CD4-positive, alpha-beta T cell (primary cell): ENCODE measurements at regions of chr13 and their contacts with region 1.

Region 1: GRCh38 chr13:24727731-24728601 is 36.0 kb upstream of the RNF17 start:
- DNase-seq: peak; percentile 51 to 91 (median 63)
- ATAC-seq: peak; percentile 99
- H3K4me3 ChIP-seq: no peak overlapping the region
- H3K4me3 Mint-ChIP-seq: no peak overlapping the region
- H3K27ac ChIP-seq: no peak overlapping the region
- H3K27ac Mint-ChIP-seq: no peak overlapping the region
- H3K4me1 ChIP-seq: peaks cover 3% of the 10 kb centered on the region
- H3K4me1 Mint-ChIP-seq: no peaks in the 10 kb centered on the region
- H3K27me3 ChIP-seq: no peaks in the 10 kb centered on the region
- H3K27me3 Mint-ChIP-seq: peaks cover 3% of the 10 kb centered on the region
- CTCF ChIP-seq: peak; percentile 89

Region 2: GRCh38 chr13:24574847-24575246 is 153.1 kb before region 1 on chr13:
- CTCF ChIA-PET with region 1: no interaction called
- POLR2A ChIA-PET with region 1: no interaction called
- intact Hi-C with region 1: loop called (anchors 2 kb)
- DNase-seq: no peak
- ATAC-seq: no peak
- H3K4me3 ChIP-seq: no peak overlapping the region
- H3K4me3 Mint-ChIP-seq: no peak overlapping the region
- H3K27ac ChIP-seq: no peak overlapping the region
- H3K27ac Mint-ChIP-seq: no peak overlapping the region
- H3K4me1 ChIP-seq: no peaks in the 10 kb centered on the region
- H3K4me1 Mint-ChIP-seq: no peaks in the 10 kb centered on the region
- H3K27me3 ChIP-seq: no peaks in the 10 kb centered on the region
- H3K27me3 Mint-ChIP-seq: peaks cover 14% of the 10 kb centered on the region
- CTCF ChIP-seq: no peak

Region 3: DNA sequence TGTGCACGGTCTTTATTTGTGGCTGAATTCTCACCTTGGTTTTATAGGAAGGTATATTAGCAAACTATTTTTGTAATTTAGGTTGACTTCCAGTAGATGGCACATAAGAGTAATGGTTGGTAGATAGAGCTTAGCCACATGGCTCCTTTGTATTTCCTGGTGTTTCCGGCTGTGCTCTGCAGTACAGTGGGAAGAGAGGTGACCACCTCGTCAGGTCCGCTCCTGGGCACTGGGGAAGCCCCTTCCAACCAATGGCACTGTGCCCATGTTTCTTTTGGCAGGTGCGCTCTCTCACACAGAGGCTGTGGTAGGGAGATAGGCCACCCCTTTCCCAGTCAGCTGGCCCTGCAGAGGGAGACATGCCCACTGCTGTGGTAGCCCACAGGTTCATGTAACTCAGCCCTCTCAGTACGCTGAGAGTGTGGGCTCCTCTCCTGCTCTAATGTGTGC is 122.0 kb before region 1 on chr13:
- CTCF ChIA-PET with region 1: interaction called, 6 read pairs
- POLR2A ChIA-PET with region 1: no interaction called
- intact Hi-C with region 1: loop called (anchors 1 kb)
- DNase-seq: peak in 1 of 14 experiments; percentile 53
- ATAC-seq: peak; percentile 91
- H3K4me3 ChIP-seq: no peak overlapping the region
- H3K4me3 Mint-ChIP-seq: no peak overlapping the region
- H3K27ac ChIP-seq: no peak overlapping the region
- H3K27ac Mint-ChIP-seq: no peak overlapping the region
- H3K4me1 ChIP-seq: peaks cover 5% of the 10 kb centered on the region
- H3K4me1 Mint-ChIP-seq: peaks cover 7% of the 10 kb centered on the region
- H3K27me3 ChIP-seq: no peaks in the 10 kb centered on the region
- H3K27me3 Mint-ChIP-seq: no peaks in the 10 kb centered on the region
- CTCF ChIP-seq: peak; percentile 49

Region 4: DNA sequence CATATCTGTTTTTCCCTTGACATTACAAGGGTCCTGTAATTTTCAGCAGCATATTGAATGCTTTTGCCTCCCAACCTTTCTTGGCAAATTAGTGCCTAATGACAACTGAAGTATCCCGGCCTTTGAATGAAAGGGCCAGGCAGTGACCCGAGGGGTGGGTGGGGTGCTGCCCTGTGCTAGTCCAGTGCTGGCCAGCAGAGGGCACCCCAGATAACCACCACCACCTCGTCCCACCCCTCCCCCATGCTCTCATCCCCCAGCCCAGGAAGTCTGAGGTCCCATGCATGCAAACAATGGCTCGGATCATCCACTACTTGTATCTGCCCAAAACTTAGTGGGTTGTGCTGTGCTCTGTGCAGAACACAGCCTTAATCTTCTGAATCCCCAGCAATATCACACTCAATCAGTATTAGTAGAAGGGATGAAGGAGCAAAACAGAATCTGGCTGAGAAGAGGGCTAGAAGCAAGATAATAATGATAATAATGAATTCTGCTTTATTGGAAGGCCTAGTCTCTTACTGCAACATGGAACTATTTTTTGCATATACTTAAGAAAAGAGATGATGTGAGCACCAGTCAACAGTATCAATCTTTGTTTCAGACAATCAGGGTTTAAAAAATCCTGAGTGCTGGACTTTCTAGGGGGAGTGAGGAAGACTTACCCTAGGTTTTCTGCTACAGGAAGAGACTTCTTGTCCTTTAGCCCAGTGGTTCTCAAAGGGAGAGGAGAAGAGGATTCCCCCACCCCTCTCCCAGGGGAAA is 43.9 kb before region 1 on chr13:
- CTCF ChIA-PET with region 1: interaction called, 4 read pairs
- POLR2A ChIA-PET with region 1: no interaction called
- intact Hi-C with region 1: loop called (anchors 2 kb)
- DNase-seq: peak; percentile 29 to 82 (median 56)
- ATAC-seq: peak; percentile 79
- H3K4me3 ChIP-seq: no peak overlapping the region
- H3K4me3 Mint-ChIP-seq: peak overlapping the region; percentile 17
- H3K27ac ChIP-seq: no peak overlapping the region
- H3K27ac Mint-ChIP-seq: peak overlapping the region; percentile 2
- H3K4me1 ChIP-seq: peaks cover 35% of the 10 kb centered on the region
- H3K4me1 Mint-ChIP-seq: peaks cover 30% of the 10 kb centered on the region
- H3K27me3 ChIP-seq: peaks cover 13 to 22% of the 10 kb centered on the region in 2 experiments
- H3K27me3 Mint-ChIP-seq: peaks cover 19% of the 10 kb centered on the region
- CTCF ChIP-seq: peak; percentile 89

Region 5: GRCh38 chr13:24693862-24694471 is 34.0 kb before region 1 on chr13:
- CTCF ChIA-PET with region 1: interaction called, 10 read pairs
- POLR2A ChIA-PET with region 1: no interaction called
- intact Hi-C with region 1: no loop called
- DNase-seq: peak in 5 of 14 experiments; percentile 17 to 77 (median 53)
- ATAC-seq: peak; percentile 60
- H3K4me3 ChIP-seq: no peak overlapping the region
- H3K4me3 Mint-ChIP-seq: no peak overlapping the region
- H3K27ac ChIP-seq: no peak overlapping the region
- H3K27ac Mint-ChIP-seq: no peak overlapping the region
- H3K4me1 ChIP-seq: peaks cover 6% of the 10 kb centered on the region
- H3K4me1 Mint-ChIP-seq: peaks cover 5% of the 10 kb centered on the region
- H3K27me3 ChIP-seq: peaks cover 6 to 29% of the 10 kb centered on the region in 2 experiments
- H3K27me3 Mint-ChIP-seq: peaks cover 36% of the 10 kb centered on the region
- CTCF ChIP-seq: peak; percentile 67

Region 6: GRCh38 chr13:24709186-24709913 is 18.6 kb before region 1 on chr13:
- CTCF ChIA-PET with region 1: interaction called, 7 read pairs
- POLR2A ChIA-PET with region 1: no interaction called
- intact Hi-C with region 1: loop called in 1 of 2 experiments (anchors 1 kb)
- DNase-seq: peak; percentile 23 to 85 (median 50)
- ATAC-seq: peak; percentile 96
- H3K4me3 ChIP-seq: peak overlapping the region; percentile 27
- H3K4me3 Mint-ChIP-seq: peak overlapping the region; percentile 22
- H3K27ac ChIP-seq: no peak overlapping the region
- H3K27ac Mint-ChIP-seq: peak overlapping the region; percentile 77
- H3K4me1 ChIP-seq: peaks cover 17% of the 10 kb centered on the region
- H3K4me1 Mint-ChIP-seq: peaks cover 14% of the 10 kb centered on the region
- H3K27me3 ChIP-seq: no peaks in the 10 kb centered on the region
- H3K27me3 Mint-ChIP-seq: no peaks in the 10 kb centered on the region
- CTCF ChIP-seq: peak; percentile 3

Region 7: DNA sequence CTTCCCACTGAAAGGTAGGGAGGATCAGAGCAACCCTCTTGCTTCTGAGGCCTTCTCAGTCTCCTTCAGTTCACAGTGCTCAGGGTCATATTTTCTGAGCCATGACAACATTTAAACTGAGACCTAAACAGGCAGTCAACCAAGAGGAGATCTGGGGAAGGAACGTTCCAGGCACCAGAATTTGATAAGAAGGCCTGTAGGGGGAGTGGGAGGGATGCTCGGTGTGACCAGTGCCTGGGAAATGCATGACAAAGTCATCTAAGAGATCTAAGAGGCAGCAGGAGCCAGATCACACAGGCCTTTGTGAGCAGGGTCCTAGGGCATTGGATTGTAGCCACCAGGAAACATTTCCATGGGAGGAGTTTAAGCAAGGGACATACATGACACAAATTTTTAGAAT is 1252.3 kb after region 1 on chr13:
- CTCF ChIA-PET with region 1: no interaction called
- POLR2A ChIA-PET with region 1: no interaction called
- intact Hi-C with region 1: no loop called
- DNase-seq: peak in 2 of 14 experiments; percentile 12 to 25
- ATAC-seq: no peak
- H3K4me3 ChIP-seq: no peak overlapping the region
- H3K4me3 Mint-ChIP-seq: no peak overlapping the region
- H3K27ac ChIP-seq: no peak overlapping the region
- H3K27ac Mint-ChIP-seq: no peak overlapping the region
- H3K4me1 ChIP-seq: peaks cover 8% of the 10 kb centered on the region
- H3K4me1 Mint-ChIP-seq: peaks cover 21% of the 10 kb centered on the region
- H3K27me3 ChIP-seq: no peaks in the 10 kb centered on the region
- H3K27me3 Mint-ChIP-seq: peaks cover 8% of the 10 kb centered on the region
- CTCF ChIP-seq: no peak